Psoas muscle (tissue), 8 donors: ENCODE measurements at regions of chr10 and their contacts with region 1.

Region 1: GRCh38 chr10:98467506-98468346 is 21.0 kb upstream of the HPS1 start:
- DNase-seq: peak; percentile 60 to 82
- ATAC-seq: peak; percentile 97 to 99 (median 98)
- H3K4me3 ChIP-seq: peak overlapping the region; percentile 71
- H3K27ac ChIP-seq: no peak overlapping the region
- H3K4me1 ChIP-seq: peaks cover 3% of the 10 kb centered on the region
- H3K27me3 ChIP-seq: no peaks in the 10 kb centered on the region
- CTCF ChIP-seq: peak; percentile 83

Region 2: DNA sequence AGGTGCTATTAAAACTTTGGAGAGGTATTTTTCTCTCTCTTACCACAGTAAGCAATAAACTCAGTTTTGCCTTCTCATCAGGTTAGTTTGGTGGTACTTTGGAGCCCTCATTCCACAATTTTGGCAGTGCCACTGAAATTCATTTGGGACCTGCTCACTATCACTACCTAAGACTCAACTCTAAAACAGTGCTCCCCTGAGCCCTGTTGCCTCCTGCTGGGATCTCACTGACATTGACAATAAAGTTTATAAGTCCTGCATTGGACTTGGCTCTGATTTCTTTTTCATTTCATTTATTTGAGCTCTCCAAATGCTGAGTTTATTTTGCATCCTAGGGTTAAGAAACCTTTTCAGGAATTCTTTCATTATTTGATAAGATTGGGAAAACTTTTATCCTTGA is 109.9 kb after region 1 on chr10:
- intact Hi-C with region 1: no loop called
- DNase-seq: no peak
- ATAC-seq: no peak
- H3K4me3 ChIP-seq: no peak overlapping the region
- H3K27ac ChIP-seq: no peak overlapping the region
- H3K4me1 ChIP-seq: no peaks in the 10 kb centered on the region
- H3K27me3 ChIP-seq: no peaks in the 10 kb centered on the region
- CTCF ChIP-seq: no peak

Region 3: GRCh38 chr10:98664331-98665042 is 196.8 kb after region 1 on chr10:
- intact Hi-C with region 1: loop called (anchors 1 to 2 kb)
- DNase-seq: no peak
- ATAC-seq: peak in 3 of 4 donors; percentile 59 to 81 (median 70)
- H3K4me3 ChIP-seq: no peak overlapping the region
- H3K27ac ChIP-seq: no peak overlapping the region
- H3K4me1 ChIP-seq: no peaks in the 10 kb centered on the region
- H3K27me3 ChIP-seq: peaks cover 0 to 6% (median 0%) of the 10 kb centered on the region in 3 donors
- CTCF ChIP-seq: peak; percentile 66